ENCODE measurements at regions of chr17 and their contacts with region 1.

Region 1: GRCh38 chr17:38674749-38675615 is at the start of gene EPOP:
- DNase-seq: peak; percentile 89 to 95 (median 90)
- ATAC-seq: peak; percentile 91 to 93 (median 91)
- H3K4me3 ChIP-seq: peak within 1 kb of the TSS; percentile 49 to 73 (median 60)
- H3K27ac ChIP-seq: peak within 1 kb of the TSS; percentile 29 to 63 (median 58)
- H3K4me1 ChIP-seq: peaks cover 0 to 4% (median 3%) of the 10 kb centered on the region in 3 donors
- H3K27me3 ChIP-seq: no peaks in the 10 kb centered on the region
- CTCF ChIP-seq: no peak
- total RNA-seq, gene EPOP: 2.4 to 4.3 (median 3.1) TPM

Region 2: DNA sequence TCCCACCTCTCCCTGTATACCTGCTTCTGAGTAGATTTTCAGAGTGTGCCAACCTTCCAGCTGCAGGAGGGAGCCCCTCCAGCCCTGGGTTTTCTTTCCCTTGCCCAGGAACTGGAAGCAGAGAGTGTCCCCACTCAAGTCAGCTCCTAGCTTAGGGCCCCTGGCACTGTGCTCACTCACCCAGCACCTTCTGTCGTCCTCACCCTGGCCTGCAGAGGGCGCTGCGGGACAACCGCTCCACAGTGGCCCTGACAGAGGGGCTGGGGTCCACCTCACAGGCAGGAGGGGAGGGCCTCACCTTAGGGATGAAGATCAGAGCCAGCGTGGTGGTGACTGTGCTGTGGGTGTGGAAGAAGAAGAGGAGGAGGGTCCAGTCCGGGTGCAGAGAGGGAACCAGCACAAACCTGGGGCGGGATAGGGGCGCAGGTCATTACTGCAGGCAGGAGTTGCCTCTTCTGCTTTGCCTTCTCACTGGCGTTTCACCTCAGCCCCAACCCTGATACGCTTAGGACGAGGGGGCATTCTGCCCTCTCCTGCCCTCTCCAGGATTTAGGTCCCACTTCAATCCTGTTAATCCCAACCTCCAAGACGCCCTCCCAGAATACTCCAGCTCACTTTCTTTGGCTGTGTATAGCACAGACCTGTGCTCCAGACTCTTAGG is 341.2 kb before region 1 on chr17:
- intact Hi-C with region 1: no loop called
- DNase-seq: peak in 4 of 6 donors; percentile 24 to 69 (median 41)
- ATAC-seq: peak in 3 of 4 donors; percentile 28 to 57 (median 50)
- H3K4me3 ChIP-seq: no peak overlapping the region
- H3K27ac ChIP-seq: no peak overlapping the region
- H3K4me1 ChIP-seq: no peaks in the 10 kb centered on the region
- H3K27me3 ChIP-seq: no peaks in the 10 kb centered on the region
- CTCF ChIP-seq: peak in 2 of 4 donors; percentile 6 to 8

Region 3: GRCh38 chr17:38729886-38730525 is 55.0 kb after region 1 on chr17 and contains the start of gene CISD3:
- intact Hi-C with region 1: loop called in 2 of 3 experiments (anchors 5 kb)
- DNase-seq: peak; percentile 85 to 95 (median 90)
- ATAC-seq: peak; percentile 63 to 77 (median 71)
- H3K4me3 ChIP-seq: peak within 1 kb of the TSS; percentile 51 to 73 (median 64)
- H3K27ac ChIP-seq: peak within 1 kb of the TSS; percentile 83 to 91 (median 85)
- H3K4me1 ChIP-seq: peaks cover 22 to 37% (median 33%) of the 10 kb centered on the region in 3 donors
- H3K27me3 ChIP-seq: no peaks in the 10 kb centered on the region
- CTCF ChIP-seq: peak; percentile 47 to 76 (median 60)
- total RNA-seq, gene CISD3: 27.5 to 44.3 (median 30.9) TPM

Region 4: DNA sequence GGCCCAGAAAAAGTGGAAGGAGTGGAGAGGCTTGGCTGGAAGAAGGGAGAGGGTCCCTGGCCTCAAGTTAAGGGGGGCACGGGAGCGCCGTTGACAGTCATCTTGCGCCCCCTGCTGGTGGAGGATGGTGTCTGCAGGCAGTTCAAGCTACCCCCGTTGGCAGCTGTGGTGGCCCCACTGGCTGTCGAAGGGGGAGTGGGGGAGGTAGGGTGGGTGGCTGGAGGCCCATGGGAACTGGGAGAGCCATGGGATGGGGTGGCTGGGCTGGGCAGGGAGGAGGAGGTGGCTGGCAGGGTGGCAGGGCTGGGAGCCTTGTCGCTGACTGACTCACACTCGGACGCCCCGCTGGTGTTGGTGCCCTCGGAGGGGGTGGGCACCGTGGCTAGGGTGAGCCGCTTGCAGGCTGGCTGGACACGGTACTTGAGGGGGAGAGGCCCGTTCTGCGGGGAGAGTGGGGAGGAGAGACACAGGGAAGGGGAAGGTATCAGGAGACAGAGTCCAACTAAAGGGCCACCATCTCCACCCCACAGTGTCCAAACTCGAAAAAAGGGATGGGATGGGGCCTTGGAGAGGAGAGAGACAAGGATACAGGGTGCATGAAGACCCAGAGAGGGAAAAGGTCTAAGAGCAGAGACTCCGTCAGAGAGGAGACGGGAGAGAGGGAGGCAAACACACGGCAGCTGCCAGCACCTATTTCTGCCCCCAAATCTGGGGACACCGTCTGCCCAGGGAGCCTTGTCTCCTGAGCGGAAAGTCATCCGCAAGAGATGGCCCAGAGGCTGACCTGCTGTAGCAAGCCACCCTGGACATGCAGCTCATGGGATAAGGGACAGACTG is 60.4 kb after region 1 on chr17:
- intact Hi-C with region 1: loop called in 2 of 3 experiments (anchors 5 kb)
- DNase-seq: peak; percentile 56 to 89 (median 72)
- ATAC-seq: peak in 1 of 4 donors; percentile 4
- H3K4me3 ChIP-seq: no peak overlapping the region
- H3K27ac ChIP-seq: peak overlapping the region in 1 of 4 donors; percentile 30
- H3K4me1 ChIP-seq: peaks cover 22 to 44% (median 38%) of the 10 kb centered on the region in 3 donors
- H3K27me3 ChIP-seq: no peaks in the 10 kb centered on the region
- CTCF ChIP-seq: peak; percentile 72 to 83 (median 82)

Region 5: DNA sequence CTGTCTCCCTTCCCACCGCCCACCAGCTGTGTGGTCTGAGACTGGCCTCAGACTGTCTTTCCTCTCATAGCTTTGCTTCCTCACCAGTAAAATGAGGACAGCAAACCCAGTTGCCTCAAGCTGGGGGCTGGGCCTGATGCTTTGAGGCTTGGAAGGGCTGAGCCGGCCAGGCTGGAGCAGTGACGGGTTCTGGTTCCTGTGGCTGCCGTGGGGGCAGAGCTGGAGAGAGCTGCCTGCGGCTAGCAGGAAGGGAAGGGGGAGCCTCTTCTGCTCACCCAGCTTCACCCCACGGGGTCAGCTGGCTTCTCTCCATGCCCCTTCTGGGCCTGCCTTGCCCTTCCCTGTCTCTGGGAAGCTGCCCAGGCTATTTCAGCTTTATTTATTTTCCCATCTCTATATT is 218.6 kb after region 1 on chr17:
- intact Hi-C with region 1: no loop called
- DNase-seq: no peak
- ATAC-seq: peak in 3 of 4 donors; percentile 16 to 67 (median 48)
- H3K4me3 ChIP-seq: no peak overlapping the region
- H3K27ac ChIP-seq: peak overlapping the region in 2 of 4 donors; percentile 41 to 48
- H3K4me1 ChIP-seq: peaks cover 0 to 14% (median 0%) of the 10 kb centered on the region in 3 donors
- H3K27me3 ChIP-seq: no peaks in the 10 kb centered on the region
- CTCF ChIP-seq: no peak

Measured in pancreas (tissue), 10 donors.